Calu3 (cell line): ENCODE measurements at regions of chr12 and their contacts with region 1.

Region 1: DNA sequence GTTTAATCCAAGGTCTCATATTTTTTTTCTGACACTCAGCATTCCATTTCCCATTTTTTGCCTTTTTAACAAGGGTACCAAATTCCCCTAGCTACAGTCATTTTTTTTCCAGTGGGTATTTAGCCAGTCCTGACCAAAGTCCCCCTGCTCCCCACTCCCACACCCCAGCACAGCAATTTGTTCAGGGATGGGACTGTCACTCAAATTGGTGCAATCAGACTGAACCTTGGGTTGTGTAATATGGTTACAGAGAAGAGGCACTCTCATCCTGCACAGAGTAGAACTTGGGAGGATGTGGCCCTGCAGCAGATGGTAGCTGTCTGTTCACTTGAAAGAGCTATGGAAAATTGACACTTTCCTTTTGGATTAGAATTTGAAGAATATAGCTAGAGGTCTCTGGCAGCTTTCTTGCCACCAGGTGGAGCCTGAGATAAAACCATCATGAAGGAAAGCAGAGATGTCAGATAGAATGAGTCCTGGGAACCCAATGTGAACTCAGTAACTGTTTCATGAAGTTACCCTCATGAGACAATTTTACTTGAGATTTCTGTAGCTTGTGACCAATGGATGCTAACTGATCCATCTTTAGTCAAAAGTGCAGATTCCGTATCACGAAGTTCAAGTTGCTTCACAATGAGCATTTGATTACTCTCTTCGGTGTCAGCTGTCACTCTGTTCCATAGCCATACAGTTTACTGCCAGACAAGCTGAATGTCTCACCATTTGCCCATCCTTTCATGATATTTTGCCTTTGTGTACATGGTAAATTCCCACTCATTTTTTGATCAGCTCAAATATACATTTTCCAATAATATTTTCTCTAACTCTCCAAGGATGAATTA is 394.0 kb upstream of the SYT1 start:
- DNase-seq: peak; percentile 58
- H3K4me3 Mint-ChIP-seq: no peak overlapping the region
- H3K27ac Mint-ChIP-seq: no peak overlapping the region
- H3K4me1 Mint-ChIP-seq: no peaks in the 10 kb centered on the region
- H3K27me3 Mint-ChIP-seq: no peaks in the 10 kb centered on the region
- CTCF ChIP-seq: peak; percentile 39

Region 2: DNA sequence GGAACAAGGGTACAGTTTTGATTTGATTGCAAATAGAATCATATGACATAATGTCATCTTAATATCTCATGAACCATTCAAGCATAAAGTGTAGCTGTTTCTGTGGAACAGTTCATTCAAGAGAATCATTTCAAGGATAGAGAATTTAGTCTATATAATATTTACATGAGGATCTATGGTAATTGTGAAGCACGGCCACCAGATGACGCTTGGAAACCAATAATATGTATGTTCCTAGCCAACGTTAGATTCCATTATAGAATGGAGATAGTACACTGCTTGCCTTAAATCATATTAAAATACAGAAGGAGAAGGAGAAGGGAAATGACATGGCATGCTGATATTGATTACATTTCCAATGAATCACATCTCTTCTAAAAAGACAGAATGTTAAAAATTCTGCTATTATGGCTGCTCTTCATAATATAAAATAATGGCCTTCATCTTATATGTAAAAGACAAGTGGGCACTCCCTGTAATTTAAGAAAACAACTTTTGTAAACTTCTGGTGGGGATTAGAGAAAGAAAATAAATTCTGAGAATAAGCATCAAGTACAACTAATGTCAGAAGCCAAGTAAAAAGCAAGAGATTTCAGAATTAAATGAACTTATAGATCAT is 288.9 kb before region 1 on chr12:
- CTCF ChIA-PET with region 1: no interaction called
- intact Hi-C with region 1: loop called (anchors 1 kb)
- DNase-seq: peak; percentile 51
- H3K4me3 Mint-ChIP-seq: no peak overlapping the region
- H3K27ac Mint-ChIP-seq: no peak overlapping the region
- H3K4me1 Mint-ChIP-seq: peaks cover 8% of the 10 kb centered on the region
- H3K27me3 Mint-ChIP-seq: no peaks in the 10 kb centered on the region
- CTCF ChIP-seq: peak; percentile 50

Region 3: DNA sequence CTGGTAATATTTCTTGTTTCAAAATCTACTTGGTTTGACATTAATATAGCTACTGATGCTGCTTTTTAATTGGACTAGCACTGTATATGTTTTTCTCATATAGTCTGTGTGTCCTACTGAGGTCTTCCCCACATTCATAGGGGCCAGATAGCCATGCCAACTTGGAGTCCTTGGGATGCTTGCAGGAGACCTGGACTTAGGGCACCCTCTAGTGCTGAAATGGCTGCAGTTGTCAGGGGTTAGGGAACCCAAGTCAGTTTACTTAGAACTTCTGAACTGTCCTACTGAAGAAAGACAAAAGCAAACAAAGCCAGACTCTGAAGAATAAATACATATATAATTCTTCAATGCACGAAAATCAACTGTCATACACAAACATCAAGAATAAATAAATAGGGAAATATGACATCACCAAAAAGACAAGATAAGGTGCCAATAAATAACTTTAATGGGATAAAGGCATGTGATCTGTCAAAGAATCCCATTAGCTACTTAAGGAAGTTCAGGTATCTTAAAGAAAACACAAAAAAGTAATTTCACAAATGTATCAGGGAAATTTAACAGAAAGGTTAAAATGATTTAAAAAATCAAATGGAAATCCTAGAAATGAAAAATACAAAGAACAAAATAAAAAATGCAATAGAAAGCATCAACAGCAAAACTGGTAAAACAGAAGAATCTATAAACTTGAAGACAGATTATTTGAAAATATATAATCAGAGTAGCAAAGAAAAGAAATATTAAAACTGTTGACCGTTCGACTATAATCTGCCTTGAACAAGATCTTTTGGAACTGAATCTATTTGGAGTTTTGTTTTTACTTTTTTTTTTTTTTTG is 114.3 kb after region 1 on chr12:
- CTCF ChIA-PET with region 1: interaction called, 4 read pairs
- intact Hi-C with region 1: loop called (anchors 1 kb)
- DNase-seq: peak; percentile 43
- H3K4me3 Mint-ChIP-seq: no peak overlapping the region
- H3K27ac Mint-ChIP-seq: no peak overlapping the region
- H3K4me1 Mint-ChIP-seq: no peaks in the 10 kb centered on the region
- H3K27me3 Mint-ChIP-seq: no peaks in the 10 kb centered on the region
- CTCF ChIP-seq: peak; percentile 50

Region 4: DNA sequence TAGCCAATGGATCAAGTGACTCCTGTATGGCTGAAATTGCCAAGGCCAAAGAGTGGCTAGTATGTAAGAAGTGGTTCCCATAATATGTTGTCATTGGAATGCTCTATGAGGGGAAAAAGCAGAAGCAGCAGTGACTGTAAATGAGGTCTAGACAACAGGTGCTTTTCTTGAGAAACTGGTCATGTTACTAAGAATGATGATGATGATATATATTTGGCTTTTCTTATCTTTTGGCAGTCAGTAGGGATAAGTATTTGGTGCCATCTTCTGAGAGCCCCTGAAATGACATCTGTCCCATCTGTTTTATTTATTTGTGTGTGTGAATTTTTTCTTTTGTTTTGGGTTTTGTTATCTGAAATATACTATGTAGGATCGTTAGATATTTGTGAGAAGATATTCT is 535.7 kb after region 1 on chr12:
- CTCF ChIA-PET with region 1: interaction called, 4 read pairs
- intact Hi-C with region 1: loop called (anchors 1 kb)
- DNase-seq: no peak
- H3K4me3 Mint-ChIP-seq: no peak overlapping the region
- H3K27ac Mint-ChIP-seq: no peak overlapping the region
- H3K4me1 Mint-ChIP-seq: no peaks in the 10 kb centered on the region
- H3K27me3 Mint-ChIP-seq: no peaks in the 10 kb centered on the region
- CTCF ChIP-seq: no peak

Region 5: GRCh38 chr12:79373896-79374499 is 903.4 kb after region 1 on chr12:
- CTCF ChIA-PET with region 1: interaction called, 3 read pairs
- intact Hi-C with region 1: loop called (anchors 10 kb)
- DNase-seq: peak; percentile 72
- H3K4me3 Mint-ChIP-seq: no peak overlapping the region
- H3K27ac Mint-ChIP-seq: no peak overlapping the region
- H3K4me1 Mint-ChIP-seq: no peaks in the 10 kb centered on the region
- H3K27me3 Mint-ChIP-seq: no peaks in the 10 kb centered on the region
- CTCF ChIP-seq: peak; percentile 91